HCT116 (cell line): ENCODE measurements at regions of chr4 and their contacts with region 1.

Region 1: DNA sequence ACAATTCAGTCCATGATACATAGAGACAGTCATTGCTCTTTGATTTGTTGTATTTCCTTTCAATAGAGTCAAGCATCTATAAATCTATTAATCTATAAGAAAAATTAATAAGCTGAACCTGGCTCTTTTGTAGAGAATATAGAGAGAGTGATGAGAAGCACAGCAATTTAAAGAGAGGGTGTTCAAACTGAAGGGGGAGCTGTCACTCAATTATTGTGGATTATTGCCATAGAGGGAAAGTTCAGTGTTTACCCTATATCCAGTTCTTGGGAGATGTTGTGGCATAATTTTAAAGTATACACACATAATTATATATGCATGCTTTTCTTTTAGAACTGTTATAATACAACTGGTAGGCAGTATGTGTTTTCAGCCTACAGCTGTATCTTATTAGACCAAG is 1469.0 kb upstream of the PABPC4L start:
- DNase-seq: no peak
- ATAC-seq: no peak
- H3K4me3 ChIP-seq: no peak overlapping the region
- H3K27ac ChIP-seq: no peak overlapping the region
- H3K4me1 ChIP-seq: no peaks in the 10 kb centered on the region
- H3K27me3 ChIP-seq: no peaks in the 10 kb centered on the region
- CTCF ChIP-seq: peak in 2 of 3 experiments; percentile 12 to 38; a peak in 3 of 6 replicates
- POLR2A ChIP-seq: no peak
- RAD21 ChIP-seq: peak; percentile 41

Region 2: DNA sequence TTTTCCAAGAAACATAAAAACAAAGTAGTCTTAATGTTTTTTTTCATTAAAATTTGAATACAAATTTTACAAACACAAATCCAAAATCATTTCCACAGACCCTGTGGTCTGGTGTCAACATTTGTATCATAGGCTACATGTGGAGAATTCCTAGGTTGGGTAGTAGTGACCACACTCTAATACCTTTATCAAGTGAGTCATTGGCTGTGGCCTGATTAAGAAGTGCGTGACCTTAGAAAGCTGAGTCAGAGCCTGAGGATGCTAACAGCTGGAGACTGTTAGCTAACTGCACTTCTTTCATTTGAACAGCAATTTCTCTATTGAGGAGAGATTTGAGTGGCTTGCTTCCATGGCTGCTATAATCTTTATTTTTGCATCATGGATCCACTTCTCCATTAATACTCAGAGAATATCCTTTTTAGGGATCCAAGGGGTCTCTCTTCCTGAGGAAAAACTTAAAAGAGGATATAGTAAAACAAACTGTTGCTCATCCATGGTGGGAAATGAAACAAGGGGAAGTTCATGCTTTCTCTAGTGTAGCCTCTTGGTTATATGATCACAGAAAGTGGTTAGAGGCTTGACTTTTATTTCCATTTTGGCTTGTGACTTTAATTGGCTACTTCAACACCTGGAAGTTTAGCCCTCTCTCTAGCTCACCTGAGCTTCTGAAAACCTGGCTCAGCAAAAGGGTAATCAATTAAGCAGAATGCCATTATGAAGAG is 1804.8 kb before region 1 on chr4:
- CTCF ChIA-PET with region 1: no interaction called
- POLR2A ChIA-PET with region 1: no interaction called
- RAD21 ChIA-PET with region 1: no interaction called
- intact Hi-C with region 1: no loop called
- DNase-seq: peak; percentile 75
- ATAC-seq: peak; percentile 99
- H3K4me3 ChIP-seq: no peak overlapping the region
- H3K27ac ChIP-seq: no peak overlapping the region
- H3K4me1 ChIP-seq: peaks cover 11 to 15% of the 10 kb centered on the region in 2 experiments
- H3K27me3 ChIP-seq: no peaks in the 10 kb centered on the region
- CTCF ChIP-seq: no peak
- POLR2A ChIP-seq: no peak
- RAD21 ChIP-seq: no peak

Region 3: GRCh38 chr4:136637071-136637777 is 966.7 kb after region 1 on chr4:
- CTCF ChIA-PET with region 1: no interaction called
- POLR2A ChIA-PET with region 1: no interaction called
- RAD21 ChIA-PET with region 1: no interaction called
- intact Hi-C with region 1: loop called (anchors 10 kb)
- DNase-seq: peak; percentile 15
- ATAC-seq: peak; percentile 47; the same call in 1 of the 2 replicates
- H3K4me3 ChIP-seq: no peak overlapping the region
- H3K27ac ChIP-seq: no peak overlapping the region
- H3K4me1 ChIP-seq: no peaks in the 10 kb centered on the region
- H3K27me3 ChIP-seq: no peaks in the 10 kb centered on the region
- CTCF ChIP-seq: peak; percentile 18 to 77 (median 62); a peak in 5 of 6 replicates
- POLR2A ChIP-seq: no peak
- RAD21 ChIP-seq: peak; percentile 40

Region 4: DNA sequence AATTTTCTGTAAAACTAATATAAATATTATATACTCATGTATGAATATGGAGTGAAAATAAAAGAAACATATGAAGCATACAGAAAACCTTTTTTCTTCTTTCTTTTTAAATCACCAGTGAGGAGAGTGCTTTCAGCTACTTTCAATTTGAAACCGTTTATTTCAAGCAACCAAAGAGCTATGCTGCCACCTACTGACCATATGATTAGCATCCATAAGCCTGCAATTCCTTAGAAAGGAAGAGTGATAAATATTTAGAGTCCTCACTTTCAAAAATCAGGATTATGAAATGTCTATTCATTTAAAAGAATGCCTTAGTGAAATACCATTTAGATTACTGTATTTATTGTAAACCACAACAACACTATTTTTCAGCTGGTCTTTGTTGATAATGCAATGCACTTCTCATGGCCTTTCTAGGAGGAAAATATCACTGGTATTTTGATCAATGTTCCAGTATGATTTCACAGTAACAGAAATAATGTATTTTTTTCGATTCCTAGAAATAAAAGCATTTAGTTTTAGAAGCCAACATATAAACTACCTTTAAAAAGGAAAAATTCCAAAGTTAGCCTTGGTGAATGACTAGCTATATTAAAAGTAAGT is 1194.1 kb after region 1 on chr4:
- CTCF ChIA-PET with region 1: interaction called, 3 read pairs
- POLR2A ChIA-PET with region 1: no interaction called
- RAD21 ChIA-PET with region 1: no interaction called
- intact Hi-C with region 1: loop called (anchors 1 kb)
- DNase-seq: peak; percentile 69
- ATAC-seq: peak; percentile 81
- H3K4me3 ChIP-seq: no peak overlapping the region
- H3K27ac ChIP-seq: no peak overlapping the region
- H3K4me1 ChIP-seq: 0 out of 4 replicates have a peak, but pooled peaks cover 0 to 4% of the 10 kb centered on the region in 2 experiments
- H3K27me3 ChIP-seq: no peaks in the 10 kb centered on the region
- CTCF ChIP-seq: peak; percentile 48 to 83 (median 72); a peak in 5 of 6 replicates
- POLR2A ChIP-seq: no peak
- RAD21 ChIP-seq: peak; percentile 83